ENCODE measurements at regions of chr3 and their contacts with region 1.

Region 1: DNA sequence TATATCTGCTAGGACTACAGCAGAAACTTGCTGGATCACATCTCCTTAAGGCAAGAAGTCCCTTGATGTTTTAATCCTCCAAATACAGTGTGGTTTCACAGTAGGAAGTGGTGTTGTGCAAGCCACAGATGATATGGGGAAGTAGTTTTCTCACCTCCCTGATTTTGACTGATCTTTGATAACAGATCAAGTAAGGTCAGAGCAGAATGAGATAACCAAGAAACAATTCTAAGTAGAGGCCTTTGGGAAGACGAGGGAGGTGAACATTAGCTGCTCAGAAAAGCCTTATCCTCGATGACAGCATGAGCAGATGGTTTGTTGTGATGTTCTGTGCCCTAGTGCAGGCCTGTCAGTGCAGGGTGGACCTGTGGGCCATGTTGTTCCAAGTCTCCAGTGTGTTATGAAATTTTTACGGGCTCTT is 61.3 kb downstream of the RIOX2 start:
- DNase-seq: peak in 5 of 9 experiments; percentile 2 to 71 (median 49)
- ATAC-seq: peak; percentile 75
- H3K4me3 ChIP-seq: peak overlapping the region; percentile 10 to 24
- H3K4me3 Mint-ChIP-seq: peak overlapping the region; percentile 82
- H3K27ac ChIP-seq: peak overlapping the region; percentile 45 to 59
- H3K27ac Mint-ChIP-seq: peak overlapping the region; percentile 94
- H3K4me1 ChIP-seq: peaks cover 18% of the 10 kb centered on the region
- H3K4me1 Mint-ChIP-seq: peaks cover 17% of the 10 kb centered on the region
- H3K27me3 ChIP-seq: no peaks in the 10 kb centered on the region
- H3K27me3 Mint-ChIP-seq: no peaks in the 10 kb centered on the region
- CTCF ChIP-seq: no peak

Region 2: DNA sequence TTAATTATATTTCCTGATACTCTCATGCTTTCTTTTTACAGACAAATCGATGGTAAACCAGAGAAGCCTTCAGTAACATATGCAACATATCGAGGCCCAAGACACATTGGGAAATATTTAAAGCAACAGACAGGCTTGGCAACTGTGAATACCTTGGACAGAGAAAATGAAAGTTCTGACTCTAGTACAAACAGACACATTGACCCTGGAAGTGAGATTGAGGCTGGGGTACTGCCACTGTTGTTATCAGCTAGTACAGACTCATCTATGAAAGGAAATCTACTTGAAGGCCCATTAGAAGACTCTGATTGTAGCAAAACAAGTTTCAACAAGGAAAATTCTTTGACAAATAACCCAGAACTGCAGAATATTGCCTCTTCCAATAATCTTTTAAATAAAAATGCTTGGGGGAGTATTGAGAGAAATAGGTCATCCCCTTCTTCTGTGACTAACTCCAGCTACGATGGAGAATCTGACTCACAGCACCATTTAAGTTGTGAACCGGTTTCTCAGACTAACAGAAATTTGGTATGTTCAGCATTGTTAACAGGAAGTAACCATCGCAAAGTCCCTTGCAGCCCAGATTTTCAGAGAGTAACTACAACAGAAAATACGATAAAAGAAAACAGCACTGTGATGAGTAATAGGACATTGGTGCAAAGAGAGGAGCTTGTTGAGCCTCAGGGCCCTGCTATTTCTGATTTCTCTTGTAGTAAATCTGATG is 39.0 kb before region 1 on chr3:
- CTCF ChIA-PET with region 1: no interaction called
- POLR2A ChIA-PET with region 1: no interaction called
- intact Hi-C with region 1: loop called in 1 of 2 experiments (anchors 5 kb)
- DNase-seq: peak in 6 of 9 experiments; percentile 1 to 43 (median 15)
- ATAC-seq: peak; percentile 71
- H3K4me3 ChIP-seq: no peak overlapping the region
- H3K4me3 Mint-ChIP-seq: peak overlapping the region; percentile 36
- H3K27ac ChIP-seq: no peak overlapping the region
- H3K27ac Mint-ChIP-seq: peak overlapping the region; percentile 57
- H3K4me1 ChIP-seq: no peaks in the 10 kb centered on the region
- H3K4me1 Mint-ChIP-seq: peaks cover 12% of the 10 kb centered on the region
- H3K27me3 ChIP-seq: no peaks in the 10 kb centered on the region
- H3K27me3 Mint-ChIP-seq: no peaks in the 10 kb centered on the region
- CTCF ChIP-seq: no peak

Region 3: DNA sequence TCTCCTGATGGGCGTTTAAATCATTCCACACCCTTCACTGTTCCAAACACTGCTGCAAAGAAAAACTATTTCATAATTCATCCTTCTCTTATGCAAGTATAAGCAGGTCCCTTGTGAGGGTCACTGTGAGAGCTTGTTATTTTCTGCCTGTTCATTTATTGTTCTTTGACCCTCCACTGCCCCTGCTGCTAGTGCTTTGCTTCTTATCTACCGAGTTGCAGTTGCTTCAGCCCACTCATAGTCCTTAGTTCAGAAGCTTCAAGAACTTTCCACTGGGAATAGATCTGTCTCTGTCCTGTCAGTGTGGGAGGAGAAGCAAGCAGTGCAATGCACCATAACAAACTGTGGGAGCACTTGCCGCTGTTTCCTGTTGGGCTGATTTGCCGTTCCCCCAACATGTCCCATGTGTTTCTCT is 21.5 kb after region 1 on chr3:
- CTCF ChIA-PET with region 1: no interaction called
- POLR2A ChIA-PET with region 1: interaction called, 3 read pairs
- intact Hi-C with region 1: loop called in 1 of 2 experiments (anchors 2 kb)
- DNase-seq: no peak
- ATAC-seq: no peak
- H3K4me3 ChIP-seq: no peak overlapping the region
- H3K4me3 Mint-ChIP-seq: no peak overlapping the region
- H3K27ac ChIP-seq: no peak overlapping the region
- H3K27ac Mint-ChIP-seq: no peak overlapping the region
- H3K4me1 ChIP-seq: no peaks in the 10 kb centered on the region
- H3K4me1 Mint-ChIP-seq: no peaks in the 10 kb centered on the region
- H3K27me3 ChIP-seq: no peaks in the 10 kb centered on the region
- H3K27me3 Mint-ChIP-seq: no peaks in the 10 kb centered on the region
- CTCF ChIP-seq: no peak